Colonic mucosa (tissue), 4 donors: ENCODE measurements at regions of chr2 and their contacts with region 1.

Region 1: GRCh38 chr2:165401285-165401852 is 68.1 kb upstream of the CSRNP3 start:
- DNase-seq: peak; percentile 34
- H3K4me3 ChIP-seq: no peak overlapping the region
- H3K27ac ChIP-seq: no peak overlapping the region
- H3K4me1 ChIP-seq: no peaks in the 10 kb centered on the region
- H3K27me3 ChIP-seq: no peaks in the 10 kb centered on the region
- CTCF ChIP-seq: peak; percentile 58

Region 2: GRCh38 chr2:165499131-165499530 is 97.8 kb after region 1 on chr2:
- intact Hi-C with region 1: no loop called
- DNase-seq: no peak
- H3K4me3 ChIP-seq: no peak overlapping the region
- H3K27ac ChIP-seq: no peak overlapping the region
- H3K4me1 ChIP-seq: no peaks in the 10 kb centered on the region
- H3K27me3 ChIP-seq: no peaks in the 10 kb centered on the region
- CTCF ChIP-seq: no peak

Region 3: DNA sequence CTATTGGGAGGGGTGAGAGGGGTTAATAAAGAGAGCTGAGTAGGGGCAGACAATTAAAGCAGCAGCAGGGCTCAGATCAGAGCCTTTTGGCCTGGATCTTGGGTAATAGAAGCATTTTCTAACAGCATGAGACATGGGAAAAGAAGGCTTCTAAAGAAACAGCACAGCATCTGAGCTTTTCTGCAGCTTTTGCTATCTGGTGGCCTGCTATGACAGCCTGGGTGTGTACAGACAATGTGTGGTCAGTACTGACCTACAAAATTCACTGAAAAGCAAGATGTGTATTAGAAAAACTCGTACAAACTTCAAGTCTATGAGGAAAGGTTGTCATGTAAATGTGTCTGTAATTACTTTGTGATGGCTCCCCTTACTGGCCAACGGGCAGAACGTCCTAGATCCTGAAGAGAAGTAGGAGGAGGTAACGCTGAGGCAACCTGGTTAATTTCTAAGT is 297.1 kb after region 1 on chr2:
- intact Hi-C with region 1: loop called (anchors 5 kb)
- DNase-seq: peak; percentile 36
- H3K4me3 ChIP-seq: no peak overlapping the region
- H3K27ac ChIP-seq: no peak overlapping the region
- H3K4me1 ChIP-seq: no peaks in the 10 kb centered on the region
- H3K27me3 ChIP-seq: no peaks in the 10 kb centered on the region
- CTCF ChIP-seq: peak; percentile 23

Region 4: DNA sequence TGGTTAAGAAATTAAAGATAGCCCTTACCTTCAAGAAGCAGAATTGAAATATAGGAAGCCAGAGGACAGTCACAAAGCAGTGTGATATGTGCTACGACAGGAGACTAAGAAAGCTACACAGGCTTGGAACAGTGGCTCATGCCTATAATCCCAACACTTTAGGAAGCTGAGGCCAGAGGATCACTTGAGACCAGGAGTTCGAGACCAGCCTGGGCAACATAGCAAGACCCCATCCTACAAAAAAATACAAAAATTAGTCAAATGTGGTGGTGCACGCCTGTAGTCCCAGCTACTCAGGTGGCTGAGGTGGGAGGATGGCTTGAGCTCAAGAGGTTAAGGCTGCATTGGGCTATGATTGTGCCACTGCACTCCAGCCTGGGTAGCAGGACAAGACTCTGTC is 370.8 kb after region 1 on chr2:
- intact Hi-C with region 1: loop called (anchors 5 kb)
- DNase-seq: no peak
- H3K4me3 ChIP-seq: no peak overlapping the region
- H3K27ac ChIP-seq: no peak overlapping the region
- H3K4me1 ChIP-seq: peaks cover under 1% of the 10 kb centered on the region
- H3K27me3 ChIP-seq: no peaks in the 10 kb centered on the region
- CTCF ChIP-seq: no peak

Region 5: DNA sequence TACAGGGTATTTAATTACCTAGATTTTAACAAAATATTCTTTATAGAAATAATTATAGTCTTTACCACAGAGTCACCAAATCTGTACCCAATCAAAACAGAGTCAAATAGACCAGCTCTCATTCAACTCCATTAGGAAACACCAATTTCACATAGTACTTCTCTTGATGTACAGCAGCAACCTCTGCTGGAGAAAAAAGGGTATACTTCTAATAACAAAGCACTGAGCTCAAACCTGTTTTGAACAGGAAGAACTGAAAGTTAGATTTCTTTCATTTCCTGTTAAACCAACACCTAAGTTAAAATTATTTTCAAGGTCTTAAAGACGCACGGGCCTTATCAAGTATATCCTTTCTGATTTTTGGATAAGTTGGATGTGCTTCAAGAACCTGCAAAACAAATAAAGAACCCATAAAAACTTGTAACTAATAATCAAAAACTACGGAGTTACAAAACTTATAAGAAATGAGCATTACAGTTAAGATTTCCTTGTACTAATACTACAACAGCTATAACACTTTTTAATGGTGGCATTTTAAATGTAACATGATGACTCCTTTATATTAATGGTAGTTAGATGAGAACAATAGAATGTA is 473.2 kb after region 1 on chr2:
- intact Hi-C with region 1: loop called (anchors 5 kb)
- DNase-seq: peak; percentile 26
- H3K4me3 ChIP-seq: no peak overlapping the region
- H3K27ac ChIP-seq: no peak overlapping the region
- H3K4me1 ChIP-seq: no peaks in the 10 kb centered on the region
- H3K27me3 ChIP-seq: no peaks in the 10 kb centered on the region
- CTCF ChIP-seq: peak; percentile 61